H1 (cell line): ENCODE measurements at regions of chr15 and their contacts with region 1.

Region 1: DNA sequence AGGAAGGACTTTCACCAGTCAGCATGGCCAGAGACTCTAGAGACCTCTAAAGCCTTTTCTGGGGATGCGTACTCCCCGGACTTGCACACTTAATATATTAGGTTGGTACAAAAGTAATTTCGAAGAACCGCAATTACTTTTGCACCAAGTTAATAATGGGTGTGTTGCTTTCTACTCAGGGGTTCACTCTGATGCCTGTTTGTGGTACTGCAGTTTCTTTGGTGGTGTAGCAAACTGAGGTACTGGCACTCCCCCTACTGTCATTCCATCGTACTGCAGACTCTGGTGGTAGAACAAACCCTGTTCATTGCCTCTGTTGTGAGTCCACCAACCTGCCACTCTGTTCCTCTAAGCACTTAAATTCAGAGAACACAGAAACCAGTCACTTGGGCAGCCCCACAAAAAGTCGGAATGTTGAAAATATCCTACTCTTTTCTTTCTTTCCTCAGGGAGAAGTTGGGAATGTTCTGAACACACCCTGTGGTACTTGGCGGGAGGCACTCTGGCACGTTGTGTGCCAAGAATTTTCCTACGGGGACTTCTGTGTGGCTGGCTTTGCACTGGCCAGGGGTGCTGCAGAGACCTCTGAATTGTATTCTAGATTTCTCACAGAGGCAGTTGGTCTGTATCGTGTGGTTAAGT is 46.3 kb downstream of the GABRG3 start:
- DNase-seq: peak; percentile 43 to 94
- H3K4me3 ChIP-seq: no peak overlapping the region
- H3K27ac ChIP-seq: no peak overlapping the region
- H3K4me1 ChIP-seq: no peaks in the 10 kb centered on the region
- H3K27me3 ChIP-seq: no peaks in the 10 kb centered on the region
- CTCF ChIP-seq: peak; percentile 69 to 100 (median 99)
- EP300 ChIP-seq: no peak
- POLR2A ChIP-seq: no peak
- RAD21 ChIP-seq: peak; percentile 97 to 98

Region 2: DNA sequence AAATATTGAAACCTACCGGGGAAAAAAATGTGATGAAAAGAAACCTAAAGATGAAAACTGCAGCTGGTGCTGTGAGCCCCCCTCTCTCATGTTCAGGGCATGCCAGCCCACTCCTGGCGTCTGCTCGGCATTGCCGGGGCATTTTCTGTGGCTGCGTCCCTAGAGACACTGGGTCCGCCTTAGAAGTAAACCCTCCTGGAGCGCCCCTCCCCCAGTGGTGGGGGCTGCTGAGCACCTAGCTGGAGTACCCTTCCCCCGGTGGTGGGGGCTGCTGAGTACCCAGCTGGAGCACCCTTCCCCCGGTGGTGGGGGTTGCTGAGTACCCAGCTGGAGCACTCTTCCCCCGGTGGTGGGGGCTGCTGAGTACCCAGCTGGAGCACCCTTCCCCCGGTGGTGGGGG is 174.9 kb before region 1 on chr15:
- CTCF ChIA-PET with region 1: no interaction called
- POLR2A ChIA-PET with region 1: no interaction called
- DNase-seq: peak in 1 of 2 experiments; percentile 63
- H3K4me3 ChIP-seq: peak overlapping the region in 1 of 4 experiments; percentile 34; a peak in 1 of 8 replicates
- H3K27ac ChIP-seq: no peak overlapping the region
- H3K4me1 ChIP-seq: peaks cover 3 to 13% (median 6%) of the 10 kb centered on the region in 4 experiments
- H3K27me3 ChIP-seq: no peaks in the 10 kb centered on the region
- CTCF ChIP-seq: no peak
- EP300 ChIP-seq: no peak
- POLR2A ChIP-seq: no peak
- RAD21 ChIP-seq: no peak

Region 3: DNA sequence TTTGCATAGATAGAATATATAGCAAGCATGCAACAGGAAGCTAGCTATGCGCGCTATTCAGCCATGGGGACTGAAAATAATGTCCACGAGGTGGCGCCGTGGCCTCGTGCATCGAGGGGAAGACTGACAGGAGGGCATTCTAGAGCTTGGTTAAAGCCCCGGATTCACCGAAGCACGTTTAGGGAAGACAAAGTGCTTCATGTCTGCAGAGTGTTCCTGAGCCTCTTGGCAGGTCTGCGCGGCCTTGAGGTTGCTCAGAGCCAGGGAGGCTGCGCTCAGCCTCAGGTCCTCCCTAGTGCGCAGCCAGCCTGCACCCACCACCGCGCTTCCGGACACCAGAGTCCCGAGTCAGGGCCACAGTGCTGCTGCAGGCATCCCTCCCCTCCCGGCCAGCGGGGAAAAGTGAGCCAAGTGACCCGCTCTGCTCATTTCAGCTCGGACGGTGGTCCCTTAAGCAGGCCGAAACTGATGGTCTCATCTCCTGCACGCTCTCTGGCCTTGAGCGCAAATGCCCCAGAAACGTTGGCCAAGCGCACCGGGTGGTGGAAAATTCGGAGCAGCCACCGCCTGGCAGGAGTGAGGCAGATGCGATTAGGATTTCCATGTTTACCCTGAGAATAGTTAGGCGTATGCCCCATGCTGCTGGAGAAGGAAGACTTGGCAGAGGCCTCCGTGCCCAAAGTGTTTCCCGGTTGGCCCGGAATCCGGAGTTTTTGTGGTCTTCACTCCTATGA is 125.7 kb before region 1 on chr15:
- CTCF ChIA-PET with region 1: interaction called, 71 read pairs
- POLR2A ChIA-PET with region 1: no interaction called
- DNase-seq: peak; percentile 62 to 93
- H3K4me3 ChIP-seq: no peak overlapping the region
- H3K27ac ChIP-seq: no peak overlapping the region
- H3K4me1 ChIP-seq: peaks cover 0 to 5% (median 4%) of the 10 kb centered on the region in 4 experiments; a peak in 4 of 7 replicates
- H3K27me3 ChIP-seq: no peaks in the 10 kb centered on the region; a peak in 1 of 7 replicates
- CTCF ChIP-seq: peak; percentile 94 to 95 (median 94)
- EP300 ChIP-seq: no peak
- POLR2A ChIP-seq: no peak
- RAD21 ChIP-seq: peak; percentile 97